ENCODE measurements at regions of chr1 and their contacts with region 1.

Region 1: DNA sequence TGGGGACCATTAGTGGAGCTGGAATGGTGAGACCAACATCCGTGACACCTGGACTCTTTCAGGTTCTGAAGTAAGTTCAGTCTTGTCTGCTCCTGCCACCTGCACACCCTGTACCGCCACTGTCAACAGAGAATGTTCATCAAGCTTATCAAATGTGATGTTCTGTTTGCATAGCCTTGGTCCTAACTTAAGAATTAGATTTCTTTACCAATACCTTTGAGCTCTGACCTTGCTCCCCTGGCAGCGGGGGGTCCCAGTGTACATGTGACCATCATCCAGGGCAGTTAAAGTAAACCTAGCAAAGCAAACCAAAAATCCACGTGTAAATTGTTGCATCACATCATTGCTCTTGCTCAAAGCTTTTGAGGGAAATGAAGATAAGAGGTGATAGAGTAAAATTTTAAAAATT is 14.5 kb downstream of the SLC25A33 start:
- DNase-seq: no peak
- ATAC-seq: no peak
- H3K4me3 ChIP-seq: no peak overlapping the region
- H3K4me3 Mint-ChIP-seq: no peak overlapping the region
- H3K27ac ChIP-seq: no peak overlapping the region
- H3K27ac Mint-ChIP-seq: no peak overlapping the region
- H3K4me1 ChIP-seq: peaks cover 13 to 14% of the 10 kb centered on the region in 2 experiments
- H3K4me1 Mint-ChIP-seq: peaks cover 18 to 20% (median 20%) of the 10 kb centered on the region in 3 donors
- H3K27me3 ChIP-seq: no peaks in the 10 kb centered on the region
- H3K27me3 Mint-ChIP-seq: no peaks in the 10 kb centered on the region

Region 2: DNA sequence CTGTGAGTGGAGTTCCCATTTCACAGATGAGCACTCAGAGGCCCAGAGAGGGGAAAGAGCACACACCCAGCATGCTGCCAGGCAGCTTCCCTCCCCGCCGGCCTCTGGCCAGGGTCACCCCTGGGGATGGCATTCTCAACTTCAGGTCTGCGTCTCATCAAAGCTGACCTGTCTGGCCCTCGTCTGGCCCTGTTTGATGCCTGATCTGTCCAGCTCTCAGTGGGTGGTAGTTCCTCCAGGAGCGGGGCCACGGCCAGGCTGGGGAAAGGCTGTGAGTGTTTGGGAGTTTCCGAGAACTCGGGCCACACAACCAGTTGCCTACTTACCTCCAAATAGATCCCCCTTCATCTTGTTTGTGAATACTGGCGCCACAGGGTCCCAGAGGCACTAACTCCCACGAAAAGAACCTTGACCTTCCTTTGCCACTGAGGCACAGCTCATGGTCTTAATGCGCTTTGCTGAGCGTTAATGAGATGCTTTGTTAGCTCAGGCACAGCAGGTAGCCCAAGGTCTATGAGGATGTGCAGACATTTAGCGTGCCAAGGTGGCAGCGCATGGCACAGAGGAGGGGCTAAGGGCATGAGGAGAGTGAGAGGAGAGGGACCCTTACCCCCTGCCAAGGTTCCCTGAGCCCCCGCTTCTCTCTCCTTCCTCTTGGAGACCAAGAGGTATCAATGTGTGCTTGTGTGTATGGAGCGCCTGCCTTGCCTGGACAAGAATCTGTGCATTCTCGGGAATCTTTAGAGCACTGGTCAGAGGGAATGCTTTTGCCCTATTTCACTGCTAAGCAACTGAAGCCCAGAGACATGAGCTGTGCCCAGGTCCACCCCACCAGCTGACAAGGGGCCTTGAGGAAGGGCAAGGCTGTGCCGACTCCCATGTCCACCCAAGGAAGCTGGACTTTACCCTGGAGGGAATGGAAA is 1986.4 kb after region 1 on chr1:
- CTCF ChIA-PET with region 1: interaction called in 1 of 2 experiments, 12 read pairs
- POLR2A ChIA-PET with region 1: no interaction called
- DNase-seq: no peak
- ATAC-seq: no peak
- H3K4me3 ChIP-seq: no peak overlapping the region
- H3K4me3 Mint-ChIP-seq: no peak overlapping the region
- H3K27ac ChIP-seq: no peak overlapping the region
- H3K27ac Mint-ChIP-seq: no peak overlapping the region
- H3K4me1 ChIP-seq: no peaks in the 10 kb centered on the region
- H3K4me1 Mint-ChIP-seq: no peaks in the 10 kb centered on the region
- H3K27me3 ChIP-seq: peaks cover 0 to 13% of the 10 kb centered on the region in 2 experiments
- H3K27me3 Mint-ChIP-seq: peaks cover 3 to 16% of the 10 kb centered on the region in 2 donors

Measured in T-cell (primary cell).